Endothelial cell of umbilical vein (primary cell): ENCODE measurements at regions of chr9 and their contacts with region 1.

Region 1: DNA sequence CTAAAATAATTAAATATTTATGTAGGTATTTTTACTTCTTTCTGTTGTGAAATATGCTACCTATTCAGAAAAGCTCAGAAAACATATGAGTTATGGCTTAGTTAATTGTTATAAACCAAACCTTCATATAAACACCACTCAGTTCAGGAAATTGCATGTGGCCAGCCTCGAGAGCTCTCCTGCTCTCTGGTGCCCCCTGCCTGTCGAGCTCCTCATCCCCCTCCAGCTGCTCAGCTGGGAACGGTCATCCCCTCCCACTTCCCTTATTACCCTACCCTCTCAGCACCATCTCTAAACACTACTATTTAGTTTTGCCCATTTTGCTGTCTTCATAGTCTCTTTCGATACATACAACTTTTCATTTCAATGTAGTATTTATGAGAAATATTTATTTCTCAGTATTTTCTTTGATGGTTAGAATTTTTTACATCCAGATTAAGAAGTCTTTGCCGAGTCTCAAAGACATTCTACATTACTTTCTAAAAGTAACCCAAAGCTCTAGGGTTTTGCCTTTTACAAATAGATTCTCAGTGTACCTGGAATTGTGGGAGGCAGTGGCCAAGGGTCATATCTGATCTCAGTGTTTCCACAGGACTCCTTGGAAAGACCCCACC is 51.2 kb upstream of the SEMA4D start:
- DNase-seq: peak; percentile 74
- H3K4me3 ChIP-seq: no peak overlapping the region
- H3K27ac ChIP-seq: no peak overlapping the region
- H3K4me1 ChIP-seq: no peaks in the 10 kb centered on the region
- H3K27me3 ChIP-seq: peaks cover 0 to 4% of the 10 kb centered on the region in 2 experiments
- CTCF ChIP-seq: peak; percentile 90 to 94
- POLR2A ChIP-seq: no peak

Region 2: GRCh38 chr9:88791105-88791805 is 757.9 kb before region 1 on chr9:
- CTCF ChIA-PET with region 1: no interaction called
- POLR2A ChIA-PET with region 1: no interaction called
- dilution Hi-C with region 1: no loop called
- intact Hi-C with region 1: no loop called
- DNase-seq: no peak
- H3K4me3 ChIP-seq: no peak overlapping the region
- H3K27ac ChIP-seq: no peak overlapping the region
- H3K4me1 ChIP-seq: peaks cover 18% of the 10 kb centered on the region
- H3K27me3 ChIP-seq: no peaks in the 10 kb centered on the region
- CTCF ChIP-seq: no peak
- POLR2A ChIP-seq: no peak

Region 3: DNA sequence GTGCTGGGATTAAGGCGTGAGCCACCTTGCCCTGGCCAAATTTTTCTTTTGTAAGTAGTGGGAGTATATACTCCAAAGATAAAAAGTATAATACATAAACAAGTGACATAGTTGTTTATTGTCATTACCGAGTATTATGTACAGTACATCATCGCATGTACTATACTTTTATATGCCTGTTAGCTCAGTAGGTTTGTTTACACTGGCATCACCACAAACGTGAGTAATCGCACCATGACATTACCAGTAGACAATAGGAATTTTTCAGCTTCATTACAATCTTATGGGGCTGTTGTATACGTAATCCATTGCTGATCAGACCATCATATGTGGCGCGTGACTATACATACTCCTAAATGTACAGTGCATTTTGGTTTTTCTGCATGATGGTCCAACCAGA is 221.1 kb before region 1 on chr9:
- CTCF ChIA-PET with region 1: interaction called, 12 read pairs
- POLR2A ChIA-PET with region 1: interaction called, 3 read pairs
- dilution Hi-C with region 1: no loop called
- intact Hi-C with region 1: no loop called
- DNase-seq: no peak
- H3K4me3 ChIP-seq: no peak overlapping the region
- H3K27ac ChIP-seq: peak overlapping the region; percentile 21
- H3K4me1 ChIP-seq: no peaks in the 10 kb centered on the region
- H3K27me3 ChIP-seq: no peaks in the 10 kb centered on the region
- CTCF ChIP-seq: no peak
- POLR2A ChIP-seq: no peak

Region 4: GRCh38 chr9:89375191-89375760 is 173.9 kb before region 1 on chr9:
- CTCF ChIA-PET with region 1: interaction called, 34 read pairs
- POLR2A ChIA-PET with region 1: no interaction called
- dilution Hi-C with region 1: no loop called
- intact Hi-C with region 1: loop called (anchors 5 kb)
- DNase-seq: peak; percentile 18
- H3K4me3 ChIP-seq: no peak overlapping the region
- H3K27ac ChIP-seq: no peak overlapping the region
- H3K4me1 ChIP-seq: no peaks in the 10 kb centered on the region
- H3K27me3 ChIP-seq: no peaks in the 10 kb centered on the region
- CTCF ChIP-seq: no peak
- POLR2A ChIP-seq: no peak

Region 5: DNA sequence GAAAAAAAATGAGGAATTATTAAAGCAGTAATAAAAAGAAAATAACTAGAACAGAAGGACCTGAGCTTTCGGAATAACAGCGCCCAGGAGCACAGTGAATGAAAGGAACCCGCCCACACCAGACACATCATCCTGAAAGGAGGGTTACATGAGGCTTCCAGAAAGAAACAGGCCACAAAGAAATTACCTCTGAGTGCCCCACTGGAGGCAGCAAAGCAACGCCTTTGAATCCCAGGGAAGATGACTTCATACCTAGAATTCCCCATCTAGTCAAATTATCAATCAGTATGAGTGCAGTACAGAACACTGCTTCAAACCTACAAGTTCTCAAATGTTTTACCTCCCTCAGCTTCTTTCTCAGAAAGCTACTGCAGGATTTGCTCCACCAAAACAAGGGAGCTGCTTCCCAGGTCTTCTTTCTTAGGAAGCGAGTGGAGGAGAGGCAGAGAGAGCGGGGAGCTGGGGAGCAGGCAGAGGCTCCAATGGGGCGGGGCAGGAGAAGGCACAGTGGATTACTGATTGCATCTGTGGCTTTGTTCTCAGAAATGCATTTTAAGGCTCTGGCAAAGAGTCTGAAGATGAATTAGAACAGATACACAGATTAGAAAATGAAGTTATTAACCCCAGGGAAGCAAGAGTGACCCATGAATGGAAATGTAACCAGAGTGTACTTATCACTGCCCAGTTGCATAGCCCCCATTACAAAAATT is 138.3 kb before region 1 on chr9:
- CTCF ChIA-PET with region 1: interaction called, 17 read pairs
- POLR2A ChIA-PET with region 1: no interaction called
- dilution Hi-C with region 1: no loop called
- intact Hi-C with region 1: loop called (anchors 2 kb)
- DNase-seq: no peak
- H3K4me3 ChIP-seq: no peak overlapping the region
- H3K27ac ChIP-seq: no peak overlapping the region
- H3K4me1 ChIP-seq: peaks cover 2% of the 10 kb centered on the region
- H3K27me3 ChIP-seq: no peaks in the 10 kb centered on the region
- CTCF ChIP-seq: no peak
- POLR2A ChIP-seq: no peak

Region 6: GRCh38 chr9:89450213-89450612 is 98.9 kb before region 1 on chr9:
- CTCF ChIA-PET with region 1: interaction called, 10 read pairs
- POLR2A ChIA-PET with region 1: no interaction called
- dilution Hi-C with region 1: no loop called
- intact Hi-C with region 1: no loop called
- DNase-seq: no peak
- H3K4me3 ChIP-seq: no peak overlapping the region
- H3K27ac ChIP-seq: no peak overlapping the region
- H3K4me1 ChIP-seq: no peaks in the 10 kb centered on the region
- H3K27me3 ChIP-seq: no peaks in the 10 kb centered on the region
- CTCF ChIP-seq: no peak
- POLR2A ChIP-seq: no peak

Region 7: DNA sequence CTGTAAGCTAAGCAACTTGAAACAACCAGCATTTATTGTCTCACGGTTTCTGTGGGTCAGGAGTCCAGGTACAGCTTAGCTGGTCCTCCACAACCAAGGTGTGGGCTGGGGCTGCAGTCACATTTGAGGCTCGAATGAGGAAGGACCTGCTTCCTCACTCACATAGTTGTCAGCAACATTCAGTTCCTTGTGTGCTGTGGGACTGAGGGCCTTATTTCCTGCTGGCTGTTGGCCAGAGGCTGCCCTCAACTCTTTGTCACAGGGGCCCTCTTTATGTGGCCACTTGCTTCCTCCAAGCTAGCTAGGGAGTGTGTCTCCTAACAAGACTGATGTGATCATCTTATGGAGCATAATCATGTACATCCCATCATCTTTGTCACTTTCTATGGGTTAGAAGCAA is 22.1 kb before region 1 on chr9:
- CTCF ChIA-PET with region 1: interaction called, 29 read pairs
- POLR2A ChIA-PET with region 1: no interaction called
- dilution Hi-C with region 1: no loop called
- intact Hi-C with region 1: no loop called
- DNase-seq: no peak
- H3K4me3 ChIP-seq: no peak overlapping the region
- H3K27ac ChIP-seq: no peak overlapping the region
- H3K4me1 ChIP-seq: peaks cover 16% of the 10 kb centered on the region
- H3K27me3 ChIP-seq: no peaks in the 10 kb centered on the region
- CTCF ChIP-seq: no peak
- POLR2A ChIP-seq: no peak

Region 8: GRCh38 chr9:89602978-89603766 is 54.0 kb after region 1 on chr9:
- CTCF ChIA-PET with region 1: interaction called, 15 read pairs
- POLR2A ChIA-PET with region 1: no interaction called
- dilution Hi-C with region 1: no loop called
- intact Hi-C with region 1: no loop called
- DNase-seq: peak; percentile 77
- H3K4me3 ChIP-seq: no peak overlapping the region
- H3K27ac ChIP-seq: no peak overlapping the region
- H3K4me1 ChIP-seq: peaks cover 34% of the 10 kb centered on the region
- H3K27me3 ChIP-seq: peaks cover 7 to 14% of the 10 kb centered on the region in 2 experiments
- CTCF ChIP-seq: peak; percentile 85 to 93
- POLR2A ChIP-seq: no peak

Region 9: GRCh38 chr9:89639367-89639795 is 90.2 kb after region 1 on chr9:
- CTCF ChIA-PET with region 1: no interaction called
- POLR2A ChIA-PET with region 1: no interaction called
- dilution Hi-C with region 1: no loop called
- intact Hi-C with region 1: no loop called
- DNase-seq: no peak
- H3K4me3 ChIP-seq: no peak overlapping the region
- H3K27ac ChIP-seq: no peak overlapping the region
- H3K4me1 ChIP-seq: no peaks in the 10 kb centered on the region
- H3K27me3 ChIP-seq: peaks cover 0 to 2% of the 10 kb centered on the region in 2 experiments
- CTCF ChIP-seq: no peak
- POLR2A ChIP-seq: no peak